Esophagus squamous epithelium (tissue), 5 donors: ENCODE measurements at regions of chr15 and their contacts with region 1.

Region 1: DNA sequence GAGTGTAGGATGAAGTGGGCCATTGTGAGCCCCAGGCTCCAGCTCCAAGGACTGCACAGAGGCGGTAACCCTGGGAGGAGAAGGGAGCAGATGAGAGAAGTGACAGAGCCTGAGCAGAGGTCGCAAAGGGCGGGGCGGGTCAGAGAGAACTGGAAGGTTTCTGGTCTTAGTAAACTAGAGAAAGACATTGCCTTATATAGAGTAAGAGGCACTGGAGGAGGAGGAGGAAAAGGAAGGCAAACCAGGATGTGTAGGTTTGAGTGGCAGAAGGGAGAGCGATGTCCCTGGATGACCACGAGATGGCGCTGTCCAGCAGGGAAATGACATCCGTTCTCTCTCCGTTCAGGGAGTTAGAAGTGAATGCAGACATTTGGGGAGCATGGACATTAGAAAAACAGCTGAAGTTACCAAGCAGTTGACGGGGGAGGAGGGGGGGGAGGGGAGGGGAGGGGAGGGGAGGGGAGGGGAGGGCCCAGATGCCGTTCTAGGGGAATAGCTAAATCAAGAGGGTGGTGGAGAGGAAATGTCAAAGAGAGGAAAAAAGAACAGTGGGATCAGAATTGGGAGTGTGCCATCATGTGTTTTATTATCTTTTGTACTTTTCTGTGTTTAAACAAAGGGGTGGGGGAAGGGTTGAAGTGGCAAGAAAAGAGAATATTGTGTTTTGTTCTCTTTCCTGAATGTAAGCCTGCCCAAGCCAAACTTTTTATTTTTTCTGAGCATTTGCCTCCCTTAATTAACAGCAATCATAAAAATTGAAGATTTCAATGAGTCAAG is 48.8 kb downstream of the STARD5 start:
- DNase-seq: no peak
- H3K4me3 ChIP-seq: no peak overlapping the region
- H3K27ac ChIP-seq: peak overlapping the region in 3 of 4 donors; percentile 47 to 57 (median 55)
- H3K4me1 ChIP-seq: peaks cover 0 to 29% (median 5%) of the 10 kb centered on the region in 3 donors
- H3K27me3 ChIP-seq: peaks cover 0 to 26% (median 0%) of the 10 kb centered on the region in 4 donors
- CTCF ChIP-seq: peak; percentile 83 to 91 (median 89)
- POLR2A ChIP-seq: no peak

Region 2: DNA sequence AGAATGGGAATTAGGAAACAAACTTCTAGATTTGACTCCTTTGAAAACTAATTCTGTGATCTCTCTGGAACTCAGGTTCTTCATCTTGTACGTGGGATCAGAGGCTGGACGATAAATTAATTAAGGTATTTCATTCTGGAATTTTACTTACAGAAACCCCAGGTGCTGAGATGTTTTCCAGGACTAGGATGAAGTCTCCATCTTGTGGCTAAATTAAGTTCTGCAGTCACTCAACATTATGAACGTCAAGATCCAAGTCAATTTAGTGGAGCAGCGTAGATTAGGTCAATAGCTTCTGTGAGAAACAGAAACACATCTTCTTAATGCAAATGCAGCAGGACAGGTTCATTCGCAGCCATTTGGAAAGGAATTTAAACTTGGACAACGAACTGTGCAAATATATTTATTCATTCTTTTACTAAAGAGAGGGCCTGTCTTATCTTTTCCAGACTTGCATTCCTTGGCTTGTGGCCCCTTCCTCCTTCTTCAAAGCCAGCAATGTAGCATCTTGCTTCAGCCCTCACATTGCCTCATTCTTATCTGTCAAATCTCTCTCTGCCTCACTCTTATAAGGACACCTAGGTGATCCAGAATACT is 125.6 kb after region 1 on chr15:
- intact Hi-C with region 1: loop called (anchors 5 kb)
- DNase-seq: no peak
- H3K4me3 ChIP-seq: no peak overlapping the region
- H3K27ac ChIP-seq: no peak overlapping the region
- H3K4me1 ChIP-seq: no peaks in the 10 kb centered on the region
- H3K27me3 ChIP-seq: no peaks in the 10 kb centered on the region
- CTCF ChIP-seq: peak; percentile 49 to 87 (median 80)
- POLR2A ChIP-seq: no peak